ENCODE measurements at regions of chr17 and their contacts with region 1.

Region 1: DNA sequence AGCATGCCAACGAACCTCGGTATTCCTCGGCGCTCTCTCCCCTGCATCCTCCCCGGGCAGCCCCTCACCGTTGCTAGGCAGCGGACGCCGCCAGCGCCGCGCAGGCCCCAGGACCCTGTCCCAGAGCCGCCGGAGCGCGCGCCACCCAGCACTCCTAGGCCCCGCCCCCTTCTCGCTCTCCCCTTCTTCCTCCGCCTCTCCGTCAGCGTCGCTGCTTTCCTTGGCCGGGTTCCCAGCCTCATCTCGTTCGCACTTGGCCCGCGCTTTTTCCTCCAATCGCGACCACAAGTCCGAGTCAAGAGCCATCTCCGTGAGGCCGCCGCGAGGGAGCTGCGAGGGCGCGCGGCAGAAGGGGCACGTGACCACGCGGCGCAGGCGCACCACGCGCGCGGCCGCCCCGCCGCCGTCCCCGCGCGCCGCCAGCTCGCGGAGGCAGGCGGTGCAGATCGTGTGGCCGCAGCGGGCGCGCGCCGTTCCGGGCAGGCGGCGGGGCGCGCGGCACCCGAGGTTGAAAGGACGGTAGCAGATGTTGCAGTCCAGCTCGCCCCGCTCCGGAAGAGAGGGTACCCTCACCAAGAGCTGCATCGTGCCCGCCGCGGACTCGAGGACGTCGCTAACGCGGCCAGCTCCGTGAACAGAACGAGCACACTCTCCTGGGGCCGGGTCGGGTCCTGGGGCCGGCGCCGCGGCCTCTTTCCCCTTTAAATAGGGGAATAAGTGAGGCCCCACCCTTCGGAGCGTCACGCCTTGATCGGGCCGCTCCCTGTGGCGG is at the start of gene RNF227:
- DNase-seq: peak; percentile 94
- ATAC-seq: peak; percentile 93
- total RNA-seq, gene RNF227: 1.1 TPM

Region 2: DNA sequence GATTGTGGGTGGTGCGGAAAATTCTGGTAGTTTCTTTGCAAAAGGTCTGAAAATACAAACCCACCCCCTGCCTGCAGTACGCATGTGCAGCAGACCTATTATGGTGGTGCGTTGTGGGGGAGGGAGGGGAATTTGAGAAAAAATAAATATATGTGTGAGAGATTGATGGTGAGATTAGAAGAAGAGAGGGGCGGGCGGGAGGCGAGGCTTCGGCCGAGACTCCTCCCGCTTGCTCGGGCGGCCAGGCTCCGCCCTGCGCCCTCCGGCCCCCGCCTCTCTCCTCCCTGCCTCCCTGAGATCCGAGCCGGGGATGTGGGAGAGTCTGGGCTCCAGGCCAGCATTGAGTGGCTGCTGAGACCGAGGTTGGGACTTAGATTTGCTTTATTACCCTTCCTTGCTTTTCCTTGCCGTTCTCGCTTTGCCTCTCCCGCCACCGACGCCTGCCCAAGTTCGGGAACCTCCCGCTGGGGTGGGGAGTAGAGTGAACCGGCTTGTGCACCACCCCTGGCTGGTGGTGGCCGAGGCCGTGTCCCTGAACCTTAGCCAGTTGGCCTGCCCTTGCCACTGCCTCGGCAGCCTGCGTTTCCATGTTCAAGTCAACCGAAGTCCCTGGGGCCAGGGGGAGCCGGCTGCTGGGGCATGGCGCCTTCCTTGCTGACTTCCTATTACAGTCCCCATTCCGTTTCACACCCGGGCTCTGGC is 28.2 kb before region 1 on chr17:
- intact Hi-C with region 1: no loop called
- DNase-seq: peak; percentile 95
- ATAC-seq: peak; percentile 84

Region 3: GRCh38 chr17:8041249-8041928 is 125.6 kb after region 1 on chr17:
- intact Hi-C with region 1: loop called (anchors 10 kb)
- DNase-seq: no peak
- ATAC-seq: peak; percentile 84

Region 4: GRCh38 chr17:8222630-8223356 is 307.0 kb after region 1 on chr17:
- intact Hi-C with region 1: no loop called
- DNase-seq: peak; percentile 96
- ATAC-seq: peak; percentile 69

Measured in left ventricle myocardium superior (tissue), 1 donor.